ENCODE measurements at regions of chr9 and their contacts with region 1.

Region 1: GRCh38 chr9:131755541-131756198 is 15.8 kb upstream of the RAPGEF1 start:
- DNase-seq: peak; percentile 71 to 79
- ATAC-seq: peak; percentile 83 to 91 (median 87)
- H3K4me3 ChIP-seq: no peak overlapping the region
- H3K27ac ChIP-seq: no peak overlapping the region
- H3K4me1 ChIP-seq: peaks cover 0 to 5% (median 0%) of the 10 kb centered on the region in 9 donors
- H3K27me3 ChIP-seq: peaks cover 0 to 35% (median 27%) of the 10 kb centered on the region in 7 donors
- CTCF ChIP-seq: peak; percentile 39 to 85 (median 76)

Region 2: GRCh38 chr9:132249123-132249522 is 493.5 kb after region 1 on chr9:
- intact Hi-C with region 1: loop called in 5 of 10 experiments (anchors 2 to 5 kb)
- DNase-seq: no peak
- ATAC-seq: peak in 2 of 8 donors; percentile 46 to 54
- H3K4me3 ChIP-seq: no peak overlapping the region
- H3K27ac ChIP-seq: no peak overlapping the region
- H3K4me1 ChIP-seq: peaks cover 0 to 22% (median 9%) of the 10 kb centered on the region in 9 donors
- H3K27me3 ChIP-seq: peaks cover 0 to 31% (median 14%) of the 10 kb centered on the region in 7 donors
- CTCF ChIP-seq: no peak

Region 3: DNA sequence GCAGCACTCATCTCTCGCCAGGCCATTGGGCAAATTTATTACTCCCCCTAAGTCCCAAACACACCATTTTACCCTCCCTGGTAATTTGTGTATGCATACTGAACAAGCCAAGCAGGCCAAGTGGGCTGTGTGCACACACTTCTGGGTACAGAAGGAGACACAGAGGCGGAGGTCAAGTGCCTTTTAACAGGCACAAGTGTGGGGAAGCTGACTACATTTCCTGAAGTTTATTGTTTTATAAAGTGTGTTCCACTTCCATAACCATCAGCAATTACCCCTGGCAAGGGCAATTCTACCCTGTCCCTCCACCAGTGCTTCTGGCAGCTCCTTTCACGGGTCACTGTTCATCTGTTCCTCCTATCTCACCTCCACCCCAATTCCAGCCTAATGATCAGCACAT is 505.2 kb after region 1 on chr9:
- intact Hi-C with region 1: loop called in 4 of 10 experiments (anchors 5 kb)
- DNase-seq: no peak
- ATAC-seq: no peak
- H3K4me3 ChIP-seq: no peak overlapping the region
- H3K27ac ChIP-seq: no peak overlapping the region
- H3K4me1 ChIP-seq: peaks cover 0 to 39% (median 12%) of the 10 kb centered on the region in 9 donors
- H3K27me3 ChIP-seq: no peaks in the 10 kb centered on the region
- CTCF ChIP-seq: no peak